HCT116 (cell line): ENCODE measurements at regions of chr17 and their contacts with region 1.

Region 1: GRCh38 chr17:10844621-10845387 is 6.9 kb upstream of the PIRT start:
- DNase-seq: peak; percentile 48
- ATAC-seq: peak; percentile 98
- H3K4me3 ChIP-seq: no peak overlapping the region
- H3K27ac ChIP-seq: no peak overlapping the region
- H3K4me1 ChIP-seq: peaks cover 4% of the 10 kb centered on the region in 2 experiments; a peak in 2 of 4 replicates
- H3K27me3 ChIP-seq: no peaks in the 10 kb centered on the region
- CTCF ChIP-seq: peak; percentile 68 to 88 (median 87)
- POLR2A ChIP-seq: no peak
- RAD21 ChIP-seq: peak; percentile 80

Region 2: DNA sequence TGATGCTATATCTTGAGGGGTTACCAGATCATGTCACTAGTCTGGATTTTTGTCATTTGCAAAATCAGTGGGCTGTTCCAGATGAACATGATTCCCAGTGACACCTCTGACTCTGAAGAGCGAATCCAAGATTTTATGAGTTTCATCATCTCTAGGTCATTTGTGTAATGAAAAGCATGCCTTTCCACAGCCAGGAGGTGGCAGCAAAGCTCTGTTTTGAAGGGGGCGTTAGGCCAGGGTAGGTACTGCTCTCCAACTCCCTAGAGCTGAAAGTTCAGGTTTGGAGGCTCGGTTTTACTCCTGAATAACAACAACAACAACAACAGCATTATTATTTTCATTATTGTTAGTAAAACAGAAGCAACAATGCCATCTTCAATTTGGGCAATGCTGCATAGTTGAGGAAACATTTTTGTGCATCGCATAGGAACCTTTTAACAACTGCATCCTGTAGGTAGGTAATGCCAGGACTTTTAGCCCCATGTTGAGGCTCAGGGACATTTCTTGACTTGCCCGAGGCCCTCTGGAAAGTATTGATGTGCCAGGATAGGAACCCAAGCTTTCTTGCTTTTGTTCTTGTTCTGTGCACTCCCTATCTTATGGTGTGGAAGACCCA is 549.0 kb before region 1 on chr17:
- CTCF ChIA-PET with region 1: no interaction called
- POLR2A ChIA-PET with region 1: no interaction called
- RAD21 ChIA-PET with region 1: no interaction called
- intact Hi-C with region 1: loop called (anchors 10 kb)
- DNase-seq: peak; percentile 65
- ATAC-seq: peak; percentile 77
- H3K4me3 ChIP-seq: no peak overlapping the region
- H3K27ac ChIP-seq: no peak overlapping the region
- H3K4me1 ChIP-seq: peaks cover 2 to 25% of the 10 kb centered on the region in 2 experiments; a peak in 3 of 4 replicates
- H3K27me3 ChIP-seq: no peaks in the 10 kb centered on the region
- CTCF ChIP-seq: peak; percentile 72 to 89 (median 80); a peak in 5 of 6 replicates
- POLR2A ChIP-seq: no peak
- RAD21 ChIP-seq: peak; percentile 85

Region 3: DNA sequence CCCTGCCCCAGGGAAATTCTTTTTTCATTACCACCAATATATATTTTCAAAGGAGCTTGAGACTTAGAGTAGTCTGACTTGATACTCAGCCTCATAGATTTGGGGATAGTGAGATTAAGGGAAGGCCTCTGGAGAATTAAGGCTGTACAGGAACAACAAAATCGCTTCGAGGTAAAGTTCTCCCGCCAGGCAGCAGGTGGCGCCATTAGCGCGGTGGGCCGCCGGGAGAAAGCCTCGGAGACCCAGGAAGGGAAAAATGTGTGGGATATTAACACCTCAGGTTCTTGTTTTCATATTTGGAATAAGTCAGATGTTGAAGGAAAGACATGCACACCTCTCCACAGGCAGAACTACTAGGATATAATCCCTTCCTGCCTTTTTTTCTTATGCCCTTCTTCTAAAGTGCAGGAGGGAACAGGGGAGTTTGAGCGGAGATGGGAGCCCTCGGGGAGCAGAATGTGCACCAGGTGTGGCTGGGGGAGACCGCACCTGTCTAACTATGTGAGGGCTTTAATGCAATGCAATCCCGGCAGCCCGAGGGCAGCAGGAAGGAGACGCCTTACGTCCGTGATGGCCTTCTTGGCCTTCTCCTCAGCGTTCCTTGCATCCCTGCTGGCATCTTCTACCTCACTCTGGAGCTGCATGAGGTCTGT is 213.6 kb before region 1 on chr17:
- CTCF ChIA-PET with region 1: interaction called, 3 read pairs
- POLR2A ChIA-PET with region 1: no interaction called
- RAD21 ChIA-PET with region 1: no interaction called
- intact Hi-C with region 1: loop called (anchors 5 kb)
- DNase-seq: no peak
- ATAC-seq: peak; percentile 90
- H3K4me3 ChIP-seq: no peak overlapping the region
- H3K27ac ChIP-seq: no peak overlapping the region
- H3K4me1 ChIP-seq: no peaks in the 10 kb centered on the region
- H3K27me3 ChIP-seq: no peaks in the 10 kb centered on the region
- CTCF ChIP-seq: peak; percentile 34 to 95 (median 94); a peak in 5 of 6 replicates
- POLR2A ChIP-seq: no peak
- RAD21 ChIP-seq: peak; percentile 57

Region 4: GRCh38 chr17:10646392-10646990 is 198.3 kb before region 1 on chr17:
- CTCF ChIA-PET with region 1: interaction called, 12 read pairs
- POLR2A ChIA-PET with region 1: no interaction called
- RAD21 ChIA-PET with region 1: interaction called in 1 of 2 experiments, 4 read pairs
- intact Hi-C with region 1: loop called (anchors 1 kb)
- DNase-seq: peak; percentile 48
- ATAC-seq: peak; percentile 78
- H3K4me3 ChIP-seq: no peak overlapping the region
- H3K27ac ChIP-seq: no peak overlapping the region
- H3K4me1 ChIP-seq: no peaks in the 10 kb centered on the region
- H3K27me3 ChIP-seq: no peaks in the 10 kb centered on the region
- CTCF ChIP-seq: peak; percentile 55 to 89 (median 86); a peak in 5 of 6 replicates
- POLR2A ChIP-seq: no peak
- RAD21 ChIP-seq: peak; percentile 69

Region 5: DNA sequence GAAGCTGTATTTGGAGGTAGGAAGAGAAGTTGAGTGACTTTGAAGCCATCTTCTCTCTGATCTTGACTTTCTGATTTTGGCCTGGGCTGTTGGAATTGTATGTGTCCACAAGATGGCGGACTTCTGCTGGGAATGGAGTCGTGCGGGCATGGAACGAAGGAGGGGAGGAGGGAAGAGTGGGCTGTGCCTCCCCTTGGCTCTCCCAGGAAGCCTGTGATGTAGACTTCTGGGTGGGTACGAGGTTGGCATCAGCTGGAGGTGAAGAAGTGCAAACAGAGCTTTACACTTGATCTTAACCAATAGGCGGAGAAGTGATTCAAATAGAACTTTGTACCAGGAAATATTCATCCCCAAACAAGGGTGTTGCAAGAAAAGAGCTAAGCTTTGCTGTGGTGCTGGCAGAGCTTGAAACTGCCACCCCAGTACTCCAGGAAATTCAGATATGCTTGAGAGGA is 107.6 kb before region 1 on chr17:
- CTCF ChIA-PET with region 1: interaction called, 31 read pairs
- POLR2A ChIA-PET with region 1: no interaction called
- RAD21 ChIA-PET with region 1: interaction called, 3 to 5 read pairs
- intact Hi-C with region 1: loop called (anchors 1 kb)
- DNase-seq: peak; percentile 39
- ATAC-seq: peak; percentile 94
- H3K4me3 ChIP-seq: no peak overlapping the region
- H3K27ac ChIP-seq: no peak overlapping the region
- H3K4me1 ChIP-seq: no peaks in the 10 kb centered on the region
- H3K27me3 ChIP-seq: peaks cover 11% of the 10 kb centered on the region; the same call in 1 of the 2 replicates
- CTCF ChIP-seq: peak; percentile 58 to 87 (median 74); a peak in 5 of 6 replicates
- POLR2A ChIP-seq: no peak
- RAD21 ChIP-seq: peak; percentile 77

Region 6: DNA sequence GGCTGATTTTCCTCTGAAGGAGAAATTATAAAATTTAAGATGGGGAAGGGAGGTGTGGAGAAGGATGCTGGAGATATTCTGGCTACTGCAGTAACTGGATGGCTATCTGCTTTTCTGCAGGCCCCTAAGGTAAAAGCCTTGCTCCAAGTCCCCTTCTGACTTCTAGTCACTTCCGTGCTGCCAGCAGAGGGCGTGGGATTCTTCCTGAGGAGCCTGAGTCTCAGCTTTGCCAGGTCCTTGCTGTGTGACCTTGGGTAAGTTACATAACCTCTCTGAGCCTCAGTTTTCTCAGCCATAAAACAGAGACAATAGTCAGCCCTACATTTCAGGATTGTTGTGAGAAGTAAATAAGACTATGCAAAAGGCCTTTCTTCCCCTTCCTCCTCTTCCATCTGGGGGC is 90.7 kb before region 1 on chr17:
- CTCF ChIA-PET with region 1: interaction called, 3 read pairs
- POLR2A ChIA-PET with region 1: no interaction called
- RAD21 ChIA-PET with region 1: no interaction called
- intact Hi-C with region 1: loop called (anchors 1 kb)
- DNase-seq: peak; percentile 51
- ATAC-seq: peak; percentile 88
- H3K4me3 ChIP-seq: no peak overlapping the region
- H3K27ac ChIP-seq: no peak overlapping the region
- H3K4me1 ChIP-seq: no peaks in the 10 kb centered on the region
- H3K27me3 ChIP-seq: peaks cover 7% of the 10 kb centered on the region; the same call in 1 of the 2 replicates
- CTCF ChIP-seq: peak; percentile 14 to 66 (median 63); a peak in 4 of 6 replicates
- POLR2A ChIP-seq: no peak
- RAD21 ChIP-seq: peak; percentile 43; the same call in 1 of the 2 replicates

Region 7: DNA sequence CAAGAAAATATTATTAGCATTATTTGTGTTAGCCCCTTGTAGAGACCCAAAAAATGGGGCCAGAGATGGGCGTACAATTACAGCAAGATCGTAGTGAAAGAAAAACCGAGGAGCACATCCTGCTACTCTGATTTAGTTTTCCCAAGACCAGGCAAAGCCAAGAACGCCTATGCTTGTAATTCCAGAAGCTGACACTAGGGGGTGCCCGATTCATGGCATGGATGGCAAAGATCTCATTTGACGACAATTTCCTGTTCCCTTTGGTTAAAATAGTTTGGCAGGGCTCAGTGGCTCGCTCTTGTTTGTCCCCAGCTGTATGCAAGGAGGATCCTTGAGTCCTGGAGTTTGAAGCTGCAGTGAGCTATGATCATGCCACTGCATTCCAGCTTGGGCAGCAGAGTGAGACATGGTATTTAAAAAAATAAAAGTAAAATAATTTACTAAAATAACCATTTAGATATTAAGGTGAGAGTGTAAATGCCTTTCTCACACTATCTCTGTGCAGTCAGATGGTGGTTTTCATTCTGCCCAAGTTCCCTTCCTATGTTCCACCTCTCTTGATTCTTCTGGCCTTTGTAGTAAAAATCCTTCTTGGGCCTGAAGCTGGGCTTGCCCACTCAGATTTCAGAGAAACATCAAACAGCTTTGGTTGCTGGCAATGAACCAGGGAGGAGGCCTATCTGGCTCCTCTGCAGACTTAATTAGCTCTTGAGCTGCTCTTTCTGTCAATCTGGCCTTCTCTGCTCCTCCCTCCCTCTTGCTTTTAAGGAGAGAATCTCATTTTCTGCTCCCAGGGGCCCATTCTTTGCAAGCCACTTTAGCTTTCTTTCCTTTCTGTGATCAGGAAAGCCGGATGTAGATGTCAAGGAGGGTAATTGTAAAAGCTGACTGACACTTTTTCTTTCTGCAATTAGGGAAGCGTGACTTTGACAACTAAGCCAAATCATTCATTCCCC is 72.1 kb before region 1 on chr17:
- CTCF ChIA-PET with region 1: interaction called, 3 read pairs
- POLR2A ChIA-PET with region 1: no interaction called
- RAD21 ChIA-PET with region 1: interaction called in 1 of 2 experiments, 3 read pairs
- intact Hi-C with region 1: loop called (anchors 2 kb)
- DNase-seq: peak; percentile 26
- ATAC-seq: peak; percentile 47
- H3K4me3 ChIP-seq: no peak overlapping the region
- H3K27ac ChIP-seq: no peak overlapping the region
- H3K4me1 ChIP-seq: no peaks in the 10 kb centered on the region
- H3K27me3 ChIP-seq: no peaks in the 10 kb centered on the region
- CTCF ChIP-seq: peak; percentile 26 to 98 (median 93); a peak in 5 of 6 replicates
- POLR2A ChIP-seq: no peak
- RAD21 ChIP-seq: peak; percentile 54